HCT116 (cell line): ENCODE measurements at regions of chr1 and their contacts with region 1.

Region 1: GRCh38 chr1:38958967-38959366 is 17.3 kb upstream of the RHBDL2 start:
- DNase-seq: no peak
- ATAC-seq: peak; percentile 72
- H3K4me3 ChIP-seq: peak overlapping the region in 1 of 2 experiments; percentile 40; a peak in 2 of 4 replicates
- H3K27ac ChIP-seq: peak overlapping the region; percentile 85
- H3K4me1 ChIP-seq: peaks cover 33 to 54% of the 10 kb centered on the region in 2 experiments
- H3K27me3 ChIP-seq: no peaks in the 10 kb centered on the region
- CTCF ChIP-seq: no peak
- POLR2A ChIP-seq: no peak
- RAD21 ChIP-seq: no peak; the same call in 1 of the 2 replicates

Region 2: GRCh38 chr1:38873027-38873969 is 85.7 kb before region 1 on chr1 and contains the start of gene MYCBP:
- CTCF ChIA-PET with region 1: no interaction called
- POLR2A ChIA-PET with region 1: no interaction called
- RAD21 ChIA-PET with region 1: no interaction called
- intact Hi-C with region 1: loop called (anchors 5 kb)
- DNase-seq: peak; percentile 89
- ATAC-seq: peak; percentile 99
- H3K4me3 ChIP-seq: peak within 1 kb of the TSS; percentile 88 to 93
- H3K27ac ChIP-seq: peak within 1 kb of the TSS; percentile 32
- H3K4me1 ChIP-seq: peaks cover 10 to 15% of the 10 kb centered on the region in 2 experiments; a peak in 3 of 4 replicates
- H3K27me3 ChIP-seq: no peaks in the 10 kb centered on the region
- CTCF ChIP-seq: no peak
- POLR2A ChIP-seq: peak; percentile 78
- RAD21 ChIP-seq: no peak
- total RNA-seq, gene MYCBP: 40.2 TPM

Region 3: DNA sequence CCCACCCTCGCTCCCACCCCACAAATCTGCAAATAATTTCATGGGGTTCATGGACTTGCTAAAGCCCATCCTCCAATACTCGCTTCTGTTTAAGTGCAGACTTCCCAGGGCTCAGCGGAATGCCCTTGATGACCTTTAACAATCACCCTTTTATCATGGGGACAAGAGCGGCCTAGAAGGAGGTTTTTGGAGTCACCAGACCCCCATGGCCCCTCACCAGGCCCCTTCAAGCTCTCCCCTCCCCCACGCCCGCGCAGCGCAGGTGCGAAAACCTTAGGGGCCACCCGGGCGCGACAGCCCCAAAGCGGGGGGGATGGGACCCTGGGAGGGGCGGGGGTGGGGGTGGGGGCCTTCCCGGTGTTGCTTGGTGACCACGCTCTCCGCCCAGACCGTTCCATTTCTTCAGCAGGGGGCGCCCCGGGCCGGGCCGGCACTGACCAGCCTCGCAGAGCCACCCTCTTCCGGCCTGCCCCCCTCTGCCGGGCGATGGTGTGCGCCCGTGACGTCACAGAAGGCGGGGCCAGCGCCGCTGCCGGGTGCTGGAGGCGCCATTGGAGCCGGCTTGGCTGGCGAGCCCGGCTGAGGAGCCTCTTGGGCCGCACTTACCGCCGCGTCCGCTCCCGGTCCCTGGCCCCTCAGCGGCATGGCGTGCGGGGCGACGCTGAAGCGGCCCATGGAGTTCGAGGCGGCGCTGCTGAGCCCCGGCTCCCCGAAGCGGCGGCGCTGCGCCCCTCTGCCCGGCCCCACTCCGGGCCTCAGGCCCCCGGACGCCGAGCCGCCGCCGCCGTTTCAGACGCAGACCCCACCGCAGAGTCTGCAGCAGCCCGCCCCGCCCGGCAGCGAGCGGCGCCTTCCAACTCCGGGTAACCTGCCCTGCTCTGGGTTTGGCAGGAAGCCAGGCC is 32.0 kb after region 1 on chr1 and contains the start of gene AKIRIN1:
- CTCF ChIA-PET with region 1: no interaction called
- POLR2A ChIA-PET with region 1: interaction called, 9 read pairs
- RAD21 ChIA-PET with region 1: no interaction called
- intact Hi-C with region 1: loop called (anchors 5 kb)
- DNase-seq: peak; percentile 86
- ATAC-seq: peak; percentile 94
- H3K4me3 ChIP-seq: peak within 1 kb of the TSS; percentile 88 to 92
- H3K27ac ChIP-seq: peak within 1 kb of the TSS; percentile 93
- H3K4me1 ChIP-seq: peaks cover 24 to 39% of the 10 kb centered on the region in 2 experiments
- H3K27me3 ChIP-seq: no peaks in the 10 kb centered on the region
- CTCF ChIP-seq: no peak
- POLR2A ChIP-seq: peak; percentile 65
- RAD21 ChIP-seq: no peak
- total RNA-seq, gene AKIRIN1: 60.0 TPM

Region 4: DNA sequence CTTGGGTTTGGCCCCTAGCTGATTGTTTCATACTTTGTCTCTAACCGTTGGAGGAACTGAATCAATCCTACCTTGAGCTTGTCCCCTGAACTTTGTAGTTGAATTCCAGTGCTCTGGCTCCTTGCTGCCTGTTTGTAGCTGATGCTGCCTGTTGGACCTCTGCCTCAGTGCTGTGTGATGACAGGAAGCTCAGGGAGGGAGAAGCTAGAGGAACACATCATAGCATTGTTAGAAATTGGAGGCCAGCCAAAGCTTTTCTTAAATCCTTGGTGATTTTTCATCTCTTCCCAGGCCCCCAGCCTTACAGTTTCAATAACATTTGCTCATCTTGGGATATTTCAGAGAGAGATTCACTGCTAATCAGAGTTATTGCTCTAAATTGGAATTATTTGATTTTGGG is 279.5 kb after region 1 on chr1:
- CTCF ChIA-PET with region 1: no interaction called
- POLR2A ChIA-PET with region 1: no interaction called
- RAD21 ChIA-PET with region 1: no interaction called
- intact Hi-C with region 1: no loop called
- DNase-seq: no peak
- ATAC-seq: no peak
- H3K4me3 ChIP-seq: no peak overlapping the region
- H3K27ac ChIP-seq: no peak overlapping the region
- H3K4me1 ChIP-seq: no peaks in the 10 kb centered on the region
- H3K27me3 ChIP-seq: no peaks in the 10 kb centered on the region
- CTCF ChIP-seq: no peak
- POLR2A ChIP-seq: no peak
- RAD21 ChIP-seq: no peak